CD4-positive, alpha-beta T cell (primary cell): ENCODE measurements at regions of chr6 and their contacts with region 1.

Region 1: GRCh38 chr6:34236131-34236996 is at the start of gene HMGA1:
- DNase-seq: peak; percentile 84 to 96 (median 89)
- ATAC-seq: peak; percentile 71
- H3K4me3 ChIP-seq: peak within 1 kb of the TSS; percentile 90
- H3K4me3 Mint-ChIP-seq: peak within 1 kb of the TSS; percentile 97
- H3K27ac ChIP-seq: peak within 1 kb of the TSS; percentile 97 to 99
- H3K27ac Mint-ChIP-seq: peak within 1 kb of the TSS; percentile 99
- H3K4me1 ChIP-seq: peaks cover 39% of the 10 kb centered on the region
- H3K4me1 Mint-ChIP-seq: peaks cover 35% of the 10 kb centered on the region
- H3K27me3 ChIP-seq: no peaks in the 10 kb centered on the region
- H3K27me3 Mint-ChIP-seq: no peaks in the 10 kb centered on the region
- CTCF ChIP-seq: no peak
- total RNA-seq, gene HMGA1: 102 to 107 TPM

Region 2: GRCh38 chr6:33430991-33431879 is 805.1 kb before region 1 on chr6:
- CTCF ChIA-PET with region 1: no interaction called
- POLR2A ChIA-PET with region 1: no interaction called
- intact Hi-C with region 1: loop called in 1 of 2 experiments (anchors 10 kb)
- DNase-seq: peak; percentile 74 to 92 (median 85)
- ATAC-seq: peak; percentile 66
- H3K4me3 ChIP-seq: peak overlapping the region; percentile 71
- H3K4me3 Mint-ChIP-seq: peak overlapping the region; percentile 93
- H3K27ac ChIP-seq: peak overlapping the region; percentile 52 to 64
- H3K27ac Mint-ChIP-seq: peak overlapping the region; percentile 92
- H3K4me1 ChIP-seq: peaks cover 63% of the 10 kb centered on the region
- H3K4me1 Mint-ChIP-seq: peaks cover 65% of the 10 kb centered on the region
- H3K27me3 ChIP-seq: no peaks in the 10 kb centered on the region
- H3K27me3 Mint-ChIP-seq: no peaks in the 10 kb centered on the region
- CTCF ChIP-seq: no peak

Region 3: DNA sequence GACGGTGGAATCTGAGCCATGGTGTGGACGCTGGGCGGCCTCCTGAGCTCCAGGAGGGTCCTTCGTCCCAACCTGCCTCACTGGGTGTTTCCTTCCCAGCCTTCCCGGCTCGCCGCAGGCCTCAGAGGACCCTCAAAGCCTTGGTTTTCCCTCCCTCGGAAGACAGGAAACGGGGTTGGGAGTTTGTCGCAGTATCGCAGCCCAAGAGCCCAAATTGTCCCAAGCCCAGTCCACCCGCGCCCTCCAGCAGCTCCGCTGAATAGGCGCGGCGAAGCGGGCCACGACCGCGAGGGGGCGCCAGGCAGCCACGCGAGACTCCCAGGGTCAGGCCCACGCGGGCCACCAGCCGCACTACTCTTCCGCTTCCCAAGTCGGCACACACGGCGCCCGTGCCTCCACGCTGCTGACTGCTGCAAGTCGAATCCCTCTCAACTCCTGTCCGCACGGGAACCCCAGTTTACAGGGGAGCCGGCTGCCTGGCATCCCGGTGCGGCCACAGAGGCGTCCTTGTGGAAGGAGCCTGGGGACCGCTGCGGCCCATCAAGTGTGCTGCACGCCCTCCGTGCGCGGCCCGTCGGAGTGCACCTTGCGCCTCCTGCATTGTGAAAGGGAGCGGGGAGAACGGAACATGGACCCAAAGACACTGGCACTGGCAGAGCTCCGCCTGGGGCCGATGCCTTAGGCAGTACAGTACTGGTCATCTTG is 40.1 kb before region 1 on chr6:
- CTCF ChIA-PET with region 1: interaction called, 12 read pairs
- POLR2A ChIA-PET with region 1: interaction called, 5 read pairs
- intact Hi-C with region 1: loop called (anchors 1 to 2 kb)
- DNase-seq: peak; percentile 79 to 96 (median 90)
- ATAC-seq: peak; percentile 99
- H3K4me3 ChIP-seq: peak overlapping the region; percentile 64
- H3K4me3 Mint-ChIP-seq: peak overlapping the region; percentile 86
- H3K27ac ChIP-seq: no peak overlapping the region
- H3K27ac Mint-ChIP-seq: no peak overlapping the region
- H3K4me1 ChIP-seq: peaks cover 12% of the 10 kb centered on the region
- H3K4me1 Mint-ChIP-seq: peaks cover 7% of the 10 kb centered on the region
- H3K27me3 ChIP-seq: no peaks in the 10 kb centered on the region
- H3K27me3 Mint-ChIP-seq: no peaks in the 10 kb centered on the region
- CTCF ChIP-seq: peak; percentile 98

Region 4: GRCh38 chr6:34392497-34393190 is 156.3 kb after region 1 on chr6 and contains the start of gene NUDT3:
- CTCF ChIA-PET with region 1: no interaction called
- POLR2A ChIA-PET with region 1: interaction called, 11 read pairs
- intact Hi-C with region 1: no loop called
- DNase-seq: peak; percentile 86 to 98 (median 92)
- ATAC-seq: peak; percentile 87
- H3K4me3 ChIP-seq: peak within 1 kb of the TSS; percentile 83
- H3K4me3 Mint-ChIP-seq: peak within 1 kb of the TSS; percentile 96
- H3K27ac ChIP-seq: peak within 1 kb of the TSS; percentile 41 to 87
- H3K27ac Mint-ChIP-seq: no peak within 1 kb of the TSS
- H3K4me1 ChIP-seq: peaks cover 29% of the 10 kb centered on the region
- H3K4me1 Mint-ChIP-seq: peaks cover 31% of the 10 kb centered on the region
- H3K27me3 ChIP-seq: no peaks in the 10 kb centered on the region
- H3K27me3 Mint-ChIP-seq: no peaks in the 10 kb centered on the region
- CTCF ChIP-seq: peak; percentile 89
- total RNA-seq, gene NUDT3: 14.8 to 15.0 TPM

Region 5: DNA sequence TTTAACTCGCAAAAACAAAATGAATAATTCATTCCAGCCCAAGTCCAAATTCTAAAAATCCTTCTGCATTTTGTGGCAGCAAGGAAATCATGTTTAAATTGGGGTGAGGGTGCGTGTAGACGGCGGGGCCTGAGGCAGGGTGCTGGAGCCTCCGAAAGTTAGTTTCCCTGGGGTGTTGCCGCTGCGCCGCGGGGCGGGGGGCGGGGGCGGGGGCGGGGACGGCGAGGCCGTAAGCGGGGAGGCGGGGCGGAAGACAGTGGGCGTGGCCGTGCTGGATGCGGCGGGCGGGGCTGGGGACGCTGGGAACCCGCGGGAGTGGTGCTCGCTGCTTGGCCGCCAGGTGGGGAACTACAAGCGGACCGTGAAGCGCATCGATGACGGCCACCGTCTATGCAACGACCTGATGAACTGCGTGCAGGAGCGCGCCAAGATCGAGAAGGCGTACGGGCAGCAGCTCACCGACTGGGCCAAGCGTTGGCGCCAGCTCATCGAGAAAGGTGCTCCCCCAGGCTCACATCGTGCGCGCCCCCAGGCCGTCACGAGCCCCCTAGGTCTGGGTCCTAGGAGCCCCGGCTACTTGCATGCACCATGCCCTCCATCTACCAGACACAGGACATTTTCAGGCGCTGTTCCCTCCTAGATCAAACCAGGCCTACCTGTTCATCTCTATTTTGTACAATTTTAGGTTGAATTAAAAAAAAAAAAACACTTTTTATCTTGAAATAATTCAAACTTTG is 290.8 kb after region 1 on chr6:
- CTCF ChIA-PET with region 1: no interaction called
- POLR2A ChIA-PET with region 1: no interaction called
- intact Hi-C with region 1: loop called in 1 of 2 experiments (anchors 5 kb)
- DNase-seq: peak; percentile 94 to 99 (median 97)
- ATAC-seq: peak; percentile 98
- H3K4me3 ChIP-seq: peak overlapping the region; percentile 26
- H3K4me3 Mint-ChIP-seq: peak overlapping the region; percentile 54
- H3K27ac ChIP-seq: no peak overlapping the region
- H3K27ac Mint-ChIP-seq: peak overlapping the region; percentile 75
- H3K4me1 ChIP-seq: peaks cover 15% of the 10 kb centered on the region
- H3K4me1 Mint-ChIP-seq: peaks cover 11% of the 10 kb centered on the region
- H3K27me3 ChIP-seq: no peaks in the 10 kb centered on the region
- H3K27me3 Mint-ChIP-seq: no peaks in the 10 kb centered on the region
- CTCF ChIP-seq: peak; percentile 78

Region 6: GRCh38 chr6:34887753-34888513 is 651.6 kb after region 1 on chr6 and contains the start of gene TAF11:
- CTCF ChIA-PET with region 1: no interaction called
- POLR2A ChIA-PET with region 1: interaction called, 10 read pairs
- intact Hi-C with region 1: no loop called
- DNase-seq: peak; percentile 78 to 96 (median 87)
- ATAC-seq: peak; percentile 69
- H3K4me3 ChIP-seq: peak within 1 kb of the TSS; percentile 98
- H3K4me3 Mint-ChIP-seq: peak within 1 kb of the TSS; percentile 97
- H3K27ac ChIP-seq: peak within 1 kb of the TSS; percentile 90 to 93
- H3K27ac Mint-ChIP-seq: peak within 1 kb of the TSS; percentile 97
- H3K4me1 ChIP-seq: peaks cover 36% of the 10 kb centered on the region
- H3K4me1 Mint-ChIP-seq: peaks cover 62% of the 10 kb centered on the region
- H3K27me3 ChIP-seq: no peaks in the 10 kb centered on the region
- H3K27me3 Mint-ChIP-seq: no peaks in the 10 kb centered on the region
- CTCF ChIP-seq: no peak
- total RNA-seq, gene TAF11: 31.5 to 38.1 TPM